Common myeloid progenitor, CD34-positive (primary cell): ENCODE measurements at regions of chr18 and their contacts with region 1.

Region 1: DNA sequence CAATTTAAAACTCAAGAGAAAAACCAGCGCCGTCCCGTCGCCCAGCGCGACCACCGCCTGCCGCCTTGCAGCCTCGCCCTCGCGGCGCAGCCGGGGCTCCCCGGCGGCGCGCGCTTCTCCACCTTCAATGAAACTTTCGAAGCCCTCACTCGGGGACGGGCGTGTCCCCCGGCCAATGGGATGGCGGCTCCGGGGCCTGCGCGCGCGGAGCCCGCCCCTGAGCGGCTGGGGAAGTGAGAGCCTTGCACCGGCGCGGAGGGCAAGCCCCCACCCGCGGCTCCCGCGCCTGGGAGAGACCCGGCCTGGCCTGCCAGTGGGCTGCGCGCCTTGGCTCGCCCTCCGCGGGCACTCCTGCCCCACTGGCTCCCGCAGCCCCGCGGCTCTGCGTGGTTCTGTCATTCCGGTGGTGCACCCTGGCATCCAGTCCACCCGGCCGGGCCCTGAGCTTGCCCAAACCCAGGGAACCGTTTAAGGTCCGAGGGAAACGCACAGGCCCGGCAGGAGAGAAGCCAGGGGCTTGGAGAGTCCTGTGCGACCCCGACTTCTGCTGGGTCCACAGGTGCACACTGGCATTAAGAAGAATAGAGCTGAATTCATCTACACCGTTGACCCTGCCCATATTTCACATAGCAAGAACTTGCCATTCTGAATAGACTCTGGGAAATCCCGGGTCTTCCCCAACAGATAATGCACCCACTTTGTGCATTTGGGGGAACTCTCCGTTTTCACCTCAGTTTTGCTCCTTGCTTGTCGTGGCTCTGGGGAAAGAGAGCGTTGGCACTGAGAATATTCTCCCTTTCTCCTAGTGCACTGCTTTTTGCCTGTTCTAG is at the start of gene PIEZO2:
- DNase-seq: peak; percentile 72 to 90 (median 89)
- H3K4me3 ChIP-seq: peak within 1 kb of the TSS; percentile 32 to 77 (median 57)
- H3K27ac ChIP-seq: no peak within 1 kb of the TSS
- H3K4me1 ChIP-seq: peaks cover 0 to 29% (median 23%) of the 10 kb centered on the region in 4 experiments
- H3K27me3 ChIP-seq: peaks cover 14 to 60% (median 42%) of the 10 kb centered on the region in 5 experiments

Region 2: DNA sequence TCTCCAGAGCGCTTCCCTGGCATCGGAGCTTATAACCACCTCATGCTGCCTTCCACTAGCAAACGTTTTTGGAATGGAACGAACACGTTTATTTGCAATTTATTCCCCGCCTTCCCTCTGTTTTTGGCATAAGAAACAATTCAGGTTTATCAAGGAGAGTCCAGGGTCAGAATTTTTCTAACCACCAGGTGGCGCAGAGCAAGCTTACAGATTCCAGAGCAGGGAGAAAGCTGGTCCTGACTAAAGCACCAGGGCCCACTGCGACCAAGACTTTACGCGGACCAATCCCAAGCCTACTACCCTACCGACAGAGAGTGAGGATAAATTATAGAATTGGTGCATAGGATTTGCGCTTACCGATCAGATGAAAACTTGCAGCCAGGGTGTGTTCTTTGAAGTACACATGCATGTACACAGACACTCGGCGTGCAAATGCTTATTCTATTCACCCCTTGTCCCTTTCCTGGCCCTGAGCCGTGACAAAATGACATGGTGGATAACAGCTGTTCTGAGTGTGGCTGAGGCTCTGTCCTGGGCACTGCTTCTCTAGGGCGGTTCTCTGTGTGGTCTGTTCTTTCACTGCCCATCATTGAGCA is 589.1 kb before region 1 on chr18:
- CTCF ChIA-PET with region 1: interaction called, 94 read pairs
- POLR2A ChIA-PET with region 1: interaction called, 3 read pairs
- DNase-seq: peak; percentile 68 to 86 (median 81)
- H3K4me3 ChIP-seq: peak overlapping the region; percentile 28 to 78 (median 48)
- H3K27ac ChIP-seq: no peak overlapping the region
- H3K4me1 ChIP-seq: peaks cover 0 to 11% (median 5%) of the 10 kb centered on the region in 4 experiments
- H3K27me3 ChIP-seq: no peaks in the 10 kb centered on the region

Region 3: GRCh38 chr18:10851824-10852319 is 297.8 kb before region 1 on chr18:
- CTCF ChIA-PET with region 1: interaction called, 24 read pairs
- POLR2A ChIA-PET with region 1: no interaction called
- DNase-seq: peak; percentile 60 to 82 (median 75)
- H3K4me3 ChIP-seq: no peak overlapping the region
- H3K27ac ChIP-seq: no peak overlapping the region
- H3K4me1 ChIP-seq: peaks cover 0 to 21% (median 7%) of the 10 kb centered on the region in 4 experiments
- H3K27me3 ChIP-seq: no peaks in the 10 kb centered on the region

Region 4: GRCh38 chr18:11114664-11115063 is 35.0 kb before region 1 on chr18:
- CTCF ChIA-PET with region 1: no interaction called
- POLR2A ChIA-PET with region 1: no interaction called
- DNase-seq: no peak
- H3K4me3 ChIP-seq: no peak overlapping the region
- H3K27ac ChIP-seq: no peak overlapping the region
- H3K4me1 ChIP-seq: no peaks in the 10 kb centered on the region
- H3K27me3 ChIP-seq: peaks cover 0 to 2% (median 0%) of the 10 kb centered on the region in 5 experiments

Region 5: DNA sequence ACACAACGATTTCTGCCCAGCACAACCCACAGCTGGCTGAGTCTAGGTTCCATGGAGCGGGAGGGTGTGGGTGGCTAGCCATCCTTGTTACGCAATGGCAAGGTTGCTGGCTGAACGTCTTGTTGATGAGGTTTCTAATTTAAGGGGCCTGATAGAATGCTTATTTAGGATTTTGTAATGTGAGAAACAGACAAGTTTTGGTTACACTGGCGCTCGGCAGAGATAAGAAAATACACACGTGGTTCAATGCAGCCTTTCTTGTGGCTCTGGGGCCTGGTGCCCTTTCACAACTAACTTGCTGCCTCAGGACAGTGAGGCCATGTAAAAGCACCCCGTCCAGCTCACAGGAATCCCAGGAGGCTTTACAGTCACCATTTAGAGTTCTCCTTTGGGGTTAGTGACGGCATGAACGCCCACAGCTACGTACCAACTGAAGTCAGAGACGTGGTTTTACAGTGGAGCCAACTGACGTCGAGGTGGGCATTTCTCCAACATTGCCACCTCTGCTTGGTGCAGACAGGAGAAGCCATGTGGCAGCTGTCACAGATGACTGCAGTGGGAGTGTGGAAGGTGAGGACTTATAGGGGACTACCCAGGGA is 29.4 kb after region 1 on chr18:
- CTCF ChIA-PET with region 1: no interaction called
- POLR2A ChIA-PET with region 1: no interaction called
- DNase-seq: peak; percentile 9 to 42 (median 28)
- H3K4me3 ChIP-seq: no peak overlapping the region
- H3K27ac ChIP-seq: no peak overlapping the region
- H3K4me1 ChIP-seq: peaks cover 5 to 22% (median 10%) of the 10 kb centered on the region in 4 experiments
- H3K27me3 ChIP-seq: no peaks in the 10 kb centered on the region

Region 6: DNA sequence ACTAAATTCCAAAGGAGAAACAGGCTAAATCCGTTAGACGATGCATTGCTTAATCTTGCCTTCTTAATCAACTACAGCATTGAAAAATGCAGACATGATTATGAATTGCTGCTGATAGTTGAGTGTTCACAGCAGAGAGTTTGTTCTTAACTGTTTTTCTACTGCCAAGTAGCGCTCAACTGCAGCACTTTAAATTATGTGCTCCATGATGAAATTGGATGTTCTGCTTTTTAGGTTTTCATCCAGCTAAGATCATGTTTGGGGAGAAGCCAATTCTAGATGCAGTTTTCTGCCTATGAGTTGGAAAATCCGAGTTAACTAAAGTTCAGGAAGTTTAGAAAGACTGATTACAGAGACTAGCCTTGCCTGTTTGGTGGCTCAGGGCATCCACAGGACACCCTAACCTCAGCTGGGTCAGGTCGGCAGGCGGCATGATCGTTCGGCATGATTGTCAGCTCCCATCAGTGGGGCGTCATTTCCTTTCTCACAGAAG is 119.1 kb after region 1 on chr18:
- CTCF ChIA-PET with region 1: no interaction called
- POLR2A ChIA-PET with region 1: no interaction called
- DNase-seq: no peak
- H3K4me3 ChIP-seq: no peak overlapping the region
- H3K27ac ChIP-seq: no peak overlapping the region
- H3K4me1 ChIP-seq: peaks cover 0 to 9% (median 2%) of the 10 kb centered on the region in 4 experiments
- H3K27me3 ChIP-seq: peaks cover 0 to 3% (median 0%) of the 10 kb centered on the region in 5 experiments